Heart right ventricle (tissue), 16 donors: ENCODE measurements at regions of chr16 and their contacts with region 1.

Region 1: GRCh38 chr16:57447186-57447962 is at the starts of genes CIAPIN1 and COQ9:
- DNase-seq: peak; percentile 95 to 96
- ATAC-seq: peak; percentile 98 to 100 (median 99)
- H3K4me3 ChIP-seq: peak within 1 kb of the TSS; percentile 73 to 96 (median 92)
- H3K27ac ChIP-seq: peak within 1 kb of the TSS; percentile 89 to 98 (median 94)
- H3K4me1 ChIP-seq: peaks cover 2 to 60% (median 36%) of the 10 kb centered on the region in 9 donors
- H3K27me3 ChIP-seq: no peaks in the 10 kb centered on the region
- CTCF ChIP-seq: no peak
- total RNA-seq, gene CIAPIN1: 49.6 to 75.1 (median 61.0) TPM
- total RNA-seq, gene COQ9: 135 to 230 (median 207) TPM

Region 2: DNA sequence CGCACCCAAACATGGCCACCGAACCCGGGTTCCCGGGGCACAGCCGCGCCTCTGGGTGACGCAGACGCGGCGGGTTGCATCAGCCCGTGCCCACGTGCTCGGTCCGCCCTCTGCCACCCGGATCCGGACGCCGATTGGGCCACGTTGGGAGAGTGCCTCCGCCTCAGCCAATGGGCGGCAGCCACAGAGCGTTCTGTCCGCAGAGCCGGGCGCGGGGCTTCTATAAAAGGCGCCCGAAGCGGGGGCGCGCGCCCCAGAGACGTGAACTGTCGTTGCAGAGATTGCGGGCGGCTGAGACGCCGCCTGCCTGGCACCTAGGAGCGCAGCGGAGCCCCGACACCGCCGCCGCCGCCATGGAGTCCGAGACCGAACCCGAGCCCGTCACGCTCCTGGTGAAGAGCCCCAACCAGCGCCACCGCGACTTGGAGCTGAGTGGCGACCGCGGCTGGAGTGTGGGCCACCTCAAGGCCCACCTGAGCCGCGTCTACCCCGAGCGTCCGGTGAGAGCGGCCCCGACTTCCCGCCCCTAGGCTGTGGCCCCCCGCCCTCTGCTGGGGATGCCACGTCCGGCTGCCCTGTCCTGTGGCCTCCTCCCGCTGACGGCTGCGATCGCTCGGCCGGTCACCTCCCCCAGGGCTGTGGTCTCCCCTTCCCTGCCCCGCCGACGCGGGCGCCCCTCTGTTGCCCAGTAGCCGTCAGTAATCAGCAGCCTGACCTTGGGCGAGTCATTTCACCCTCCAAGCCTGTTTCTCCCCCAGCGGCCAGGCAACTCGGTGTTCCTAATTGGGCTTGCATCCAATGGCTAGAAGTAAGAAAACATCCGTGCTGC is 515.3 kb before region 1 on chr16 and contains the start of gene HERPUD1:
- intact Hi-C with region 1: loop called in 1 of 10 experiments (anchors 10 kb)
- DNase-seq: peak; percentile 99
- ATAC-seq: peak; percentile 94 to 98 (median 96)
- H3K4me3 ChIP-seq: peak within 1 kb of the TSS; percentile 61 to 100 (median 95)
- H3K27ac ChIP-seq: peak within 1 kb of the TSS; percentile 95 to 100 (median 99)
- H3K4me1 ChIP-seq: peaks cover 8 to 50% (median 47%) of the 10 kb centered on the region in 9 donors
- H3K27me3 ChIP-seq: no peaks in the 10 kb centered on the region
- CTCF ChIP-seq: peak in 3 of 9 donors; percentile 30 to 35 (median 33)
- total RNA-seq, gene HERPUD1: 107 to 175 (median 128) TPM